Brain microvascular endothelial cell (primary cell): ENCODE measurements at regions of chr10 and their contacts with region 1.

Region 1: GRCh38 chr10:102509387-102509786 is 5.6 kb downstream of the SUFU start:
- DNase-seq: peak; percentile 14
- H3K4me3 ChIP-seq: no peak overlapping the region
- H3K27ac ChIP-seq: no peak overlapping the region
- H3K27me3 ChIP-seq: no peaks in the 10 kb centered on the region
- CTCF ChIP-seq: no peak

Region 2: GRCh38 chr10:102565793-102566192 is 56.4 kb after region 1 on chr10:
- in situ Hi-C with region 1: loop called (anchors 5 kb)
- DNase-seq: no peak
- H3K4me3 ChIP-seq: no peak overlapping the region
- H3K27ac ChIP-seq: no peak overlapping the region
- H3K27me3 ChIP-seq: no peaks in the 10 kb centered on the region
- CTCF ChIP-seq: peak; percentile 26